Upper lobe of right lung (tissue), 1 donor: ENCODE measurements at regions of chr2 and their contacts with region 1.

Region 1: DNA sequence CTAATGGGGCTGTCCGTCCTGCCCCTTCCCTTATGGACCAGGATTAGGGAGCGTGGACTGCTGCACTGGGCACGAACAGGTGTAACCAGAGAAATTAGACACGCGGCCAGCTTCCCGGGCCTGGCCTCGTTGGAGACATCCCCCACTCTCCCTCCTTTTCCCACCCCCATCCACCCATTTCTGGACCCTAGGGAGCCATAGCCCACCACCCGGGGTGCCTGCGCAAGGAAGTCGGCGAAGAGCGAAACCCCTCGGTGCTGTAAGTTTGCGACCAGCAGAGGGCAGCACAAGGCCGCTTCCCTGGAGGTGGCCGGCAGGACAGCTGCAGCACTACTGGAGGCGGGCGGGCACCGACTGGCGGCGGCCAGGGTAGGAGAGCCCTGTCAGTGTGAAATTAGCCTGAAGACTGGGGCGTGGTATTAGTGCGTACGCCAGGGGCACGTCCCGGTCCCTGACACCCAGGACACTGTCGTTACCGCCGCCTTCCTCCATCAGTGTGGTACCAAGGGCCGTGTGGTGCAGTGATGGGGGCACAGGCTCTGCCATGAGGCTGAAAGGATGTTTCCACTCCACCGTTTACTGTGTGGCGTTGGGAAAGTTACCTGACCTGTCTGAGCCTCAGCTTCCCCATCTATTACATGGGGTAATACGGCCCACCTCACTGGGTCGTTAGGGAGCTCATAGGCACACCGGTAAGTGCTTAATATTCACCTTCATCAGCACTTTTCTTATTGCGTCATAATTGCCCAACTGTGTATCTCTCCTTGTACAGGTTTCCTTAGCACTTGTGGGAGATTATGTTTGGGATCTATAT is 36.0 kb upstream of the CD207 start:
- DNase-seq: peak; percentile 94
- ATAC-seq: peak; percentile 99
- H3K4me3 ChIP-seq: no peak overlapping the region
- H3K27ac ChIP-seq: no peak overlapping the region
- H3K4me1 ChIP-seq: peaks cover 3% of the 10 kb centered on the region
- H3K27me3 ChIP-seq: peaks cover 55% of the 10 kb centered on the region
- CTCF ChIP-seq: peak; percentile 90

Region 2: DNA sequence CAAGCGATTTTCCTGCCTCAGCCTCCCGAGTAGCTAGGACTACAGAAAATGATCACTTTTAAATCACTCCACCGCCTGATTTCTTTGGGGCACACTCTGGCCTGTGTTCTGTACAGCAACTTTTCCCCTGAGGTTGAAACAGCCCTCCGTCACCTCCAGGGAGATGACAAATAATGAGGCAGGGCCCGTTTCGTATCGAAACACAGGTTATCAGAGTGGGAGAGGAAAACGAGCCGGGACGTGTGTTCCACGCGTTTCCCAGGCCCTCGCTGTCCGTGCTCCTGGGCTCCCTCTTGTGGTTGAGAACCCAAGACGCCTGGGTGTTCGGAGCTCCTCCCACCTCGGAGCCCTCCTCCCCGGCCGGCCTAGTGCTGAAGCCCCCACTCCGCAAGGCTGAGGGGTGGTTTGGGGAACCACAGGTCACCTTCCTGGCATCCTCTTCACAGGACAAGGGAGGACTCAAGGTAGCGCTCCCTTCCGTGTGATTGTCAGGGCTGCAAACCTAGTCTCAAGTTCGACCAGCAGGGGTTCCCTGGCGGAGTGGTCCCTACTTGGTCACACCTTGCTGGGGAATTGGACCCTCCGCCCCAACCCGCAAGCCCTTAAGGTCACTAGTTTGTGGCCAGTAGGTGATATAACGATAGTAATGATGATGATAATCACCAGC is 76.9 kb after region 1 on chr2:
- intact Hi-C with region 1: loop called (anchors 10 kb)
- DNase-seq: peak; percentile 86
- ATAC-seq: peak; percentile 97
- H3K4me3 ChIP-seq: peak overlapping the region; percentile 29
- H3K27ac ChIP-seq: no peak overlapping the region
- H3K4me1 ChIP-seq: no peaks in the 10 kb centered on the region
- H3K27me3 ChIP-seq: peaks cover 10% of the 10 kb centered on the region
- CTCF ChIP-seq: peak; percentile 85